Left lung (tissue), 14 donors: ENCODE measurements at regions of chr11 and their contacts with region 1.

Region 1: GRCh38 chr11:1515082-1516060 is 28.8 kb upstream of the MOB2 start:
- DNase-seq: peak; percentile 66 to 94 (median 76)
- ATAC-seq: peak; percentile 97
- H3K4me3 ChIP-seq: no peak overlapping the region
- H3K27ac ChIP-seq: no peak overlapping the region
- H3K4me1 ChIP-seq: peaks cover 6 to 38% of the 10 kb centered on the region in 2 donors
- H3K27me3 ChIP-seq: no peaks in the 10 kb centered on the region
- CTCF ChIP-seq: peak; percentile 87 to 94

Region 2: GRCh38 chr11:1202776-1203504 is 312.4 kb before region 1 on chr11:
- intact Hi-C with region 1: loop called in 1 of 2 experiments (anchors 5 kb)
- DNase-seq: peak; percentile 31 to 92 (median 54)
- ATAC-seq: peak; percentile 91
- H3K4me3 ChIP-seq: no peak overlapping the region
- H3K27ac ChIP-seq: no peak overlapping the region
- H3K4me1 ChIP-seq: no peaks in the 10 kb centered on the region
- H3K27me3 ChIP-seq: peaks cover 0 to 78% of the 10 kb centered on the region in 2 donors
- CTCF ChIP-seq: peak; percentile 91 to 94

Region 3: DNA sequence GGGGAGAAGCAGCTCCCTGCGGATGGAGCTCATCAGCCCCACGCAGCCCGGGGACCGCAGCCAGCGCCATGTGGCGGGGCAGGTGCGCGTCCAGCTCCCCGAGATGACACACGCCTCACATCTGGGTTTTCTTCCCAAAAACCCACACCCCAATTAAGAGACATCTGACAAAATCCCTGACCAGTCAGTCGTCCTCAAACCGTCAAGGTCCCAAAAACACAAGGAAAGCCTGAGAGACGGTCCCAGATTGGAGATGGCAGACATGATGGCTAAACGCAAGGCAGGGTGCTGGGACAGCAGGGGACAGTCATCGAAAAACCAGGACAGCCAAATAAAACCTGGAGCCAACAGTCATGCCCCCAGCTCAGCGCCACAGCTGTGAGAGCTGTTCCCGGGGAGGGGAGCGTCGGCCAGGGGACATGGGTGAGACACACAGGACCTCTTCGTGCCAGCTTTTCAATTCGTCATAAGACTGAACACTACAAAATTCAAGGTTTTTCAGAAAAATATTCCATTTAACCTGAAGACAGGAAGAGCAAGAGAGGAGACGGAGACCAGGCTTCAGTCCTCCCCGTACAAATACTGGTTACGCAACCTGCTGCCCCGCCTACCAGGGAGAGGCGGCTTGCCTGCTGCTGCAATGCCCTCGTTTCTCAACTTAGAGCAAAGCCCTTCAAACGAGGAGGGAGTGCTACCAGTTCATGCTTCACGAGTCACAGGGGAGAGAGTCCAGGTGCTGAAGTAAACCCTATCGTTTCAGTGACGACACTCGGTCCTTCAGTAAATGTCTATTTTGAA is 216.5 kb before region 1 on chr11:
- intact Hi-C with region 1: loop called in 1 of 2 experiments (anchors 10 kb)
- DNase-seq: peak; percentile 63 to 95 (median 90)
- ATAC-seq: peak; percentile 94
- H3K4me3 ChIP-seq: no peak overlapping the region
- H3K27ac ChIP-seq: peak overlapping the region; percentile 48 to 51
- H3K4me1 ChIP-seq: peaks cover 27 to 51% of the 10 kb centered on the region in 2 donors
- H3K27me3 ChIP-seq: no peaks in the 10 kb centered on the region
- CTCF ChIP-seq: no peak

Region 4: DNA sequence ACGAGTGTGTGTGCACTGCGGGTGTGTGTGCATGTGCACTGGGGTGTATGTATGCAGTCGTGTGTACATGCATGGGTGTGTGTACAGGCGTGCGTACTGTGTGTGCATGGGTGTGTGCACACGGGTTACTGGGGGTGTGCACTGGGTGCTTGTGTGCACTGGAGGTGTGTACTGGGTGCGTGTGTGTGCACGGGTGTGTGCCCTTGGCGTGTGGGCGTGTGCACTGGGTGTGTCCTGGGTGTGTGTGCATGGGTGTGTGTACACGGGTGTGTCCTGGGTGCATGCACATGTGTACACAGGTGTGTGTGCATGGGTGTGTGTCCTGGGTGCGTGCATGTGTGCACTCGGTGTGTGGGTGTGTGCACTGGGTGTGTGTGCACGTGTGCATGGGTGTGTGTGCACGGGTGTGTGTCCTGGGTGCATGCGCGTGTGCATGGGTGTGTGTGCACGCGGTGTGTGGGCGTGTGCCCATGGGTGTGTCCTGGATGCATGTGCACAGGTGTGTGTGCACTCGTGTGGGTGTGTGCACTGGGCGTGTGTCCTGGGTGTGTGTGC is 86.5 kb before region 1 on chr11:
- intact Hi-C with region 1: no loop called
- DNase-seq: no peak
- ATAC-seq: no peak
- H3K4me3 ChIP-seq: no peak overlapping the region
- H3K27ac ChIP-seq: no peak overlapping the region
- H3K4me1 ChIP-seq: no peaks in the 10 kb centered on the region
- H3K27me3 ChIP-seq: peaks cover 0 to 40% of the 10 kb centered on the region in 2 donors
- CTCF ChIP-seq: no peak